Panc1 (cell line): ENCODE measurements at regions of chr5 and their contacts with region 1.

Region 1: DNA sequence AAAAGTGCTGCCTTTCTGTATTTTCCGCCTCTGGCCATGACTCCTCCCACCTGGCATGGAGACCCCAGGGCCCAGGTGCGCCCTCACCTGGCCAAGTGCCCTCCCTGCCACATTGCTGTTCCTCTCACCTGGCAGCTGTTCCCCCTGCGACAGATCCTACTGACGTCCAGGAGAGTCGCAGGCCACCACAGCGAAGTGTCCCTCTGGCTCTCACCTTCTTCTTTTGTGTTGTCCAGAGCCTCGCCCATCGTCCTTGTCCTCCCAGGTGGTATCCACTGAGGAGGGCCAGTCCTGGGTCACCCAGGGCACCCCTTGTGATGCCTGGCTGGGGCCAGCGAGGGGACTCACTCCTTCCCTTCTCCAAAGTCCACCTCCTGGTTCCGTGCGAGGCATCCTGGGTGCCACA is 2.6 kb downstream of the NKD2 start:
- DNase-seq: no peak
- ATAC-seq: no peak
- H3K4me3 ChIP-seq: no peak overlapping the region
- H3K27ac ChIP-seq: no peak overlapping the region
- H3K4me1 ChIP-seq: peaks cover 22% of the 10 kb centered on the region
- H3K27me3 ChIP-seq: no peaks in the 10 kb centered on the region
- CTCF ChIP-seq: peak; percentile 86

Region 2: DNA sequence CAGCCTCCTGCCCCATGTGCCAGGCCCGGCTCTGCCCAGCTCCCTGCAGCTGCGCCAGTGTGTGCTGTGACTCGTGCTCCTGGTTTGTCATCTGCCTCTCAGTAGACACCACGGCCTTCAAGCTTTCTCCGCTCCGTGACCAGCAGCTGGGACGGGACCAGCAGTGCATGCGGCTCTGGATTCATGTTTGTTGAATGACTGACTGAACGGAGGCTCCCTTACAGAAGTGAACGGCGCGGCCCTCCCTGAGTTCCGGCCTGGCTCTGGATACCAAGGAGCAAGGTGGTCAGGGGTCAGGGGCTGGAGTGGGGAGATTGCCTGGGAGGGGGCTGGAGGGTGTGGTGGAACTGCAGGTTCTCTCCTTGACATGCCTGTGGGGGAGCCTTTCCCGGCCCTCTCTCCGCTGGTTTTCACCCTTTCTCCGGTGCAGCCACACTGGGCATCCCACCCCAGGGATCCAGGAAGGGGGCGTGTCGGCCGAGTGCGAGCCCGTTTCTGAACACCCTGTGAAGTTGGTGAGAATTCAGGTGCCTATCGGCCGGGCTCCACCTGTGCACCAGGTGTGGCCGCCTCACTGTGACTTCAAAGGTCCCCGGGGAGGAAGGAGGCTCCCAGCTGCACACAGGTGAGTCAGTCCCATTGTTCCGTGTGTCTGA is 410.2 kb before region 1 on chr5:
- CTCF ChIA-PET with region 1: no interaction called
- POLR2A ChIA-PET with region 1: no interaction called
- in situ Hi-C with region 1: no loop called
- intact Hi-C with region 1: no loop called
- DNase-seq: no peak
- ATAC-seq: no peak
- H3K4me3 ChIP-seq: no peak overlapping the region
- H3K27ac ChIP-seq: no peak overlapping the region
- H3K4me1 ChIP-seq: no peaks in the 10 kb centered on the region
- H3K27me3 ChIP-seq: peaks cover 11% of the 10 kb centered on the region; the same call in 1 of the 2 replicates
- CTCF ChIP-seq: no peak

Region 3: DNA sequence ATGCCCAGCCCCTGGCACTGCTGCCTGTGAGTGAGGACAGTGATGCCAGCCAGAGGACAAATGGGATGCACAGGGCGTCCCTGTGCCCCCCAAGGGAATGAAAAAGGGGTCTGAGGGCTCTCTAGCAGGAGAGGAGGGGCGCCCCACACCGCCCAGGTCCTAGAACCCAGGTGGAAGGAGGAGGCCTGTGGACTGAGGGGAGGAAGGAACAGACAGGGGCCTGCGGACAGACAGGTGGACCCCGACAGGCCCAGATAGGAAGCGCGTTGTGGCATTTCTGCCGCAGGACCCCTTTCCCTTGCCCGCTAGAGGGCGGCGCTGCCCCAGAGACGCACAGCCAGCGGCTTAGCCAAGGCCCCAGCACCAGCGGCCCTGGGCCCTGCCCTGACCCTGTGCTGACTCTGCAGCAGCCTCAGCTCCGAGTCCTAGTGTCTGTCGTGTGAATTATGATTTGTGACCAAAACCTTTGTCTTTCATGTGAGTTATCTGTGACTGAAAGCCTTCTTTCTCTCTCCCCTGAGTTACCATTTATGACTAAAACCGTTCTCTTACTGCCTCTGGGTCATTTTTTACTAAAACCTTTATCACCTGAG is 87.9 kb before region 1 on chr5:
- CTCF ChIA-PET with region 1: interaction called, 10 read pairs
- POLR2A ChIA-PET with region 1: interaction called, 3 read pairs
- in situ Hi-C with region 1: no loop called
- intact Hi-C with region 1: loop called (anchors 5 kb)
- DNase-seq: peak; percentile 42
- ATAC-seq: peak; percentile 94
- H3K4me3 ChIP-seq: no peak overlapping the region
- H3K27ac ChIP-seq: peak overlapping the region; percentile 40; the same call in 1 of the 2 replicates
- H3K4me1 ChIP-seq: peaks cover 20% of the 10 kb centered on the region
- H3K27me3 ChIP-seq: no peaks in the 10 kb centered on the region; the same call in 1 of the 2 replicates
- CTCF ChIP-seq: peak; percentile 97